Gastrocnemius medialis (tissue), 4 donors: ENCODE measurements at regions of chr10 and their contacts with region 1.

Region 1: DNA sequence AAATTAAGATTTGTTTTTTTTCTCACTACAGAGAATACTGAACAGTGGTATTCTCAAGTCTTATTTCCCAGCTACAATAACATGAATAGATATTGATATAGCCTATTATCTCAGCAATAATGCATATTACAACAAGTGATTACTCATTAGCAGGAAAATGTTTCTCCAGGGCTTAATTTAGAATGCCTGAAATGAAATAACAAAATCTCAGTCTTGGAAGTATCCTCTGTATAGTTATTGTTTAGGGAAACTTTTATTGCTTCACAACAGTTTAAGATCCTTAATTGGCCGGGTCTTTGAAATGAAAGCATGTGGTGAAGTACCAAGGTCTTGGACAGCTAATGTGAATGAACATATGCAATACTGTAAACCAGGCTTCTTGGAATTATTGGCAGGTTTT is 79.1 kb upstream of the ZEB1 start:
- DNase-seq: no peak
- ATAC-seq: no peak
- H3K4me3 ChIP-seq: no peak overlapping the region
- H3K27ac ChIP-seq: no peak overlapping the region
- H3K4me1 ChIP-seq: no peaks in the 10 kb centered on the region
- H3K27me3 ChIP-seq: no peaks in the 10 kb centered on the region
- CTCF ChIP-seq: no peak
- POLR2A ChIP-seq: no peak

Region 2: DNA sequence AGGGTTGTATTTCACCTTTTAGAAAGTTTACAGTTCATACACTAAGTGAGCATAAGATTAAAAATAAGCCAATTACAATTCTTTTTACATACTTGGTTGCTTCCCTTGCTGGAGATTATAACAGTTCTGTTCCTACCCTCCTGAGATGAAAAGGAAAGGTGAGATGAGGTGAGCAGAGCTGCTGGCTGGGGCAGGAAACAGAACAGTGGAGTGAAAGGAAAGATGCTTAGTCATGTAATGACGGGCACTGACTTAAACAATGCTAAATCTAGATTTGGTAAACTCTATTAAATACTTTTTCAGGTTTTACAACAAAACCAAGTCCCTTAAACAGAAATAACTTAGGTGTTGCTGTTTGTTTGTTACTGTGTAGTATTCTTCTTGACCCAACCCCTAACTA is 59.2 kb after region 1 on chr10:
- in situ Hi-C with region 1: no loop called
- intact Hi-C with region 1: loop called (anchors 2 kb)
- DNase-seq: no peak
- ATAC-seq: no peak
- H3K4me3 ChIP-seq: no peak overlapping the region
- H3K27ac ChIP-seq: peak overlapping the region in 1 of 4 donors; percentile 19
- H3K4me1 ChIP-seq: peaks cover 0 to 6% of the 10 kb centered on the region in 2 donors
- H3K27me3 ChIP-seq: no peaks in the 10 kb centered on the region
- CTCF ChIP-seq: no peak
- POLR2A ChIP-seq: no peak

Region 3: DNA sequence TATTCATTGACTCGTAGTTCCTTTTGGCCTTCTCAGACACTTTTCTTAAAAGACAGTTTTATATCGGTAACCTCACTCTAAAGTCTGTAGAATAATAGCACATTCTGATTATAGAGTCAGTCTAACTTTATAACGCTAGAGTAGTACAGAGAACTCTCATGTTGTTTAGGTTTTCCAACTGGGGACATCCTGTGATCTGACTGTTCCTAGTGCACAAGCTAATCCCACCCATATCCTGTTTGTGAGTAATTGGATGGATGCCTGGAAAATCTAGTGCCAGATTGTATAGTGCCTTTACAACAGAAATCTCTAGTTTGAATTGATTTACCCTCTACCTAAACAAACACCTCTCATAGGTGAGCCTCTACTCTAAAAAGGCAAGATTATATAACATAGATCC is 186.4 kb after region 1 on chr10:
- in situ Hi-C with region 1: no loop called
- intact Hi-C with region 1: no loop called
- DNase-seq: no peak
- ATAC-seq: peak; percentile 62 to 74
- H3K4me3 ChIP-seq: peak overlapping the region in 1 of 4 donors; percentile 4
- H3K27ac ChIP-seq: peak overlapping the region; percentile 55 to 80 (median 74)
- H3K4me1 ChIP-seq: peaks cover 56 to 63% of the 10 kb centered on the region in 2 donors
- H3K27me3 ChIP-seq: no peaks in the 10 kb centered on the region
- CTCF ChIP-seq: no peak
- POLR2A ChIP-seq: peak in 1 of 2 donors; percentile 14

Region 4: GRCh38 chr10:32041290-32042028 is 801.5 kb after region 1 on chr10:
- in situ Hi-C with region 1: no loop called
- intact Hi-C with region 1: no loop called
- DNase-seq: no peak
- ATAC-seq: no peak
- H3K4me3 ChIP-seq: no peak overlapping the region
- H3K27ac ChIP-seq: no peak overlapping the region
- H3K4me1 ChIP-seq: peaks cover 37 to 45% of the 10 kb centered on the region in 2 donors
- H3K27me3 ChIP-seq: no peaks in the 10 kb centered on the region
- CTCF ChIP-seq: no peak
- POLR2A ChIP-seq: no peak